Endothelial cell of umbilical vein (primary cell): ENCODE measurements at regions of chr1 and their contacts with region 1.

Region 1: DNA sequence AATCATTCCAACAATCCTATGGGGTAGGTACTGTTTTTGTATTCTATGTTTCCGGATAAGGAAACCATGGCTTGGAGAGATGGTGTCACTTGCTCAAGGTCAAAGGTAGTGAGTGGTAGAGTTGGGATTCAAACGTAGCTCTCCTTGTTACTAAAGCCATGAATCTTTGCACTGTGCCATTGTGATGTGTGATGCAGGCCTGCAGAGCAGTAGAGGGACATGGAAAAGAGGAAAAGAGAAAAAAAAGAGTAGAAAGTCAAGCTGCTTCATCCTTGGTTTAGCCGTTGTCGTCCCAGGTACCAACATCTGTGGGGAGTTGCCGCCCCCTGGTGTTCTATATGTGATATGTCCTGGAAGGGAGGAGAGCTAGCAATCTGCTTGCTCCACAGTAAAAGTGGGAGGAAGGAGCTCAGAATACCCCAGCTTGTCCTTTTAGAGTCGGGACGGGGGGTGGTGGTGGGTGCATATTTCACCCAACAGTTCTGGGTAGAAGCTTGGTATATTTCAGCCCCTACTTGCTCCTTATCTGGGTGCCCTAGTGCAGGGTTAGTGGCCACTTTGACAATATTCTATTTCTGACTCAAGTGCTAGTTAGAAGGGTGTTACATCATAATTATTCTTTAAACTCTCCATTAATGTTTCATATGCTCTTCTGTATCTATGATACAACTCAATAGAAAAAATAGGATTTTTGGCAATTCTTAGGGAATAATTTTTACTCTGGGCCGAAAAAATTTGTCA is 98.4 kb downstream of the EBNA1BP2 start:
- DNase-seq: peak; percentile 79
- H3K4me3 ChIP-seq: no peak overlapping the region
- H3K27ac ChIP-seq: no peak overlapping the region
- H3K4me1 ChIP-seq: no peaks in the 10 kb centered on the region
- H3K27me3 ChIP-seq: no peaks in the 10 kb centered on the region
- CTCF ChIP-seq: peak; percentile 75 to 83
- POLR2A ChIP-seq: no peak

Region 2: DNA sequence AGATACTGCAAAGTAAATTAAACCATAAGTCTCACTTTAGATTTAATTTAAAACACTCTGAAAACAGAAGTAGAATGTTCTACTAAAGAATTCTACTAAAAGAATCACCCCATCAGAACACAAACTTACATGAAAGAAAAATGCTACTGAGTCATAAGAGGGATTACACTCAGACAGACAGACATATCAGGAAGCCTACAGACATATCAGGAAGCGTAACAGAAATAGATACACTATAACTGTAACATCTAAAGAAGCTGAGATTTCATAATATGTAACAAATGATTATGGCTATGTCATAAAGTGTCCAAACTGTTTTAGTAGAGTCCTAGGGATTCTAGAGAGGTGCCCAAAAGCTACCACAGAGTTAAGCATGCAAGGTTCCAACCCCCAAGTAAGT is 762.5 kb before region 1 on chr1:
- CTCF ChIA-PET with region 1: no interaction called
- POLR2A ChIA-PET with region 1: no interaction called
- dilution Hi-C with region 1: no loop called
- intact Hi-C with region 1: no loop called
- DNase-seq: no peak
- H3K4me3 ChIP-seq: no peak overlapping the region
- H3K27ac ChIP-seq: no peak overlapping the region
- H3K4me1 ChIP-seq: no peaks in the 10 kb centered on the region
- H3K27me3 ChIP-seq: no peaks in the 10 kb centered on the region
- CTCF ChIP-seq: no peak
- POLR2A ChIP-seq: no peak

Region 3: DNA sequence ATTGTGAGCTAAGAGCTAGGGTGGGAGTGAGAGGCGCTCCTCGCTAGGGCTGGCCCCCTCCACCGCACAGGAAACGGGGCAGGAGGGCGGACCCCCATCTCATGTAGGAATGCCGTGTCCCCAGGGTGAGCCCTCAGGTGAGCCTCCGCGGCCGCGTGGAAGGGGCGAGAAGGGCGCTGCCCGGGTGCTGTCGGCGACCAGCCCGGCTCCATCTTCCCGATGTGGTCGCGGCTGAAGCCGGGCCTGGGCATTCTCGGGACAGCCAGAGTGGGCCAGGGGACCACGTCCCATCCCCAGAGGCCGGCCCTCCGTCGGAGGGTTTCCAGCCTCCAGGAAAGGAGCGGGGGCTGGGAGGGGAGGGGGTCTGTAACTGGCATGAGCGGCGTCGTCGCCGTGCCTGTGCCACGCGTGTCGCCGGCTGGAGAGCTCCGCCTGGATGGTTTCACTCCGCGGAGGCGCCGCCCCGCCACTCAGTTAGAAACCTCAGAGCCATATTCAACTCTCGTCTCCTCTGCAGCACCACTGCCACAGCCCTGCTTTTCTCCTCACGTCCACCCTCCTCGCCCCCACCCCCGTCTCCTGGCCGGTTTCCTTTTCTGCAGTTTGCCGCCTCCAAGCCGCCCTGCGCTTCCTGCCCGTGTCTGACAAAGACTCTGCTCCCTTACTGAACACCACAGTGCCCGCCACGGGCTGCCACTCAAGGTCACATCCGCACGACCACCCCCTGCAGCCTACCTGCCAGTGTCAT is 288.5 kb before region 1 on chr1 and contains the start of gene TMEM269:
- CTCF ChIA-PET with region 1: interaction called, 244 read pairs
- POLR2A ChIA-PET with region 1: no interaction called
- dilution Hi-C with region 1: no loop called
- intact Hi-C with region 1: no loop called
- DNase-seq: peak; percentile 38
- H3K4me3 ChIP-seq: peak within 1 kb of the TSS; percentile 14 to 37 (median 35)
- H3K27ac ChIP-seq: no peak within 1 kb of the TSS
- H3K4me1 ChIP-seq: peaks cover 8% of the 10 kb centered on the region
- H3K27me3 ChIP-seq: no peaks in the 10 kb centered on the region
- CTCF ChIP-seq: no peak
- POLR2A ChIP-seq: peak; percentile 21
- total RNA-seq, gene TMEM269: not detected in 2 replicates

Region 4: GRCh38 chr1:42846257-42847110 is 227.2 kb before region 1 on chr1 and contains the start of gene ZNF691:
- CTCF ChIA-PET with region 1: interaction called, 21 read pairs
- POLR2A ChIA-PET with region 1: no interaction called
- dilution Hi-C with region 1: no loop called
- intact Hi-C with region 1: no loop called
- DNase-seq: peak; percentile 99
- H3K4me3 ChIP-seq: peak within 1 kb of the TSS; percentile 61 to 84 (median 75)
- H3K27ac ChIP-seq: no peak within 1 kb of the TSS
- H3K4me1 ChIP-seq: peaks cover 12% of the 10 kb centered on the region
- H3K27me3 ChIP-seq: no peaks in the 10 kb centered on the region
- CTCF ChIP-seq: peak in 1 of 2 donors; percentile 44
- POLR2A ChIP-seq: peak; percentile 78
- total RNA-seq, gene ZNF691: 6.6 and 7.4 TPM in 2 replicates

Region 5: DNA sequence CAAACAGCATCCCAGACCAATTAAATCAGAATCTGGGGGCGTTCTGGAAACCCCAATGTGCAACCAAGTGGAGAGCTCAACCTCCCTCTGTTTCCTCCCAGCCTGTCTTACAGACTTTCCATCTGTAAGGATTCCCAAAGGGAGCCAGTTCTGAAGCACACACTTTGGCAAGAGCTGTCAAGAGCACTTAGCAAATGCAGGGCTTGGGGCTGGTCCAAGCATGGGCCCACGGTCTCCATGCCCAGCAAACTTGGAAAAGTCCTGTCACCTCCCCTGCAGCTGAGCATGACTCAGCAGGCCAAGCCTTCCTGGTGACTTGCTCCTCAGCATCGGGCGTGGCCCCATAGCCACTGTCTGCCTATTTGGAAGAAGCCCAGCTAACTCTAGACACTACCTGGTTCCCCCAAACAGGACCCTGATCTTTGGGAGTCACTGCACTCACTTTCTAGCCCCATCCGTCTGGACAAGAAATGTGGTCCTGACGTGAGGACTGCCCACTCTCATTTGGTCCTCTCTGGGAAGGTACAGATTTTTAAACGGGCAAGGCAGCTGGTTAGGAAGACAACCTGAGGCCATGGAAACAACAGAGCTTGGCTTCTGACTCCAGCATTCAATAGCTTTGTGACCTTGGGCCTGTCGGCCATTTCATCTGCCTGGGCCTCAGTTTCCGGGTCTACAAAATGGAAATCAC is 131.9 kb before region 1 on chr1:
- CTCF ChIA-PET with region 1: interaction called, 11 read pairs
- POLR2A ChIA-PET with region 1: no interaction called
- dilution Hi-C with region 1: no loop called
- intact Hi-C with region 1: no loop called
- DNase-seq: peak; percentile 79
- H3K4me3 ChIP-seq: no peak overlapping the region
- H3K27ac ChIP-seq: peak overlapping the region; percentile 98
- H3K4me1 ChIP-seq: peaks cover 47% of the 10 kb centered on the region
- H3K27me3 ChIP-seq: no peaks in the 10 kb centered on the region
- CTCF ChIP-seq: no peak
- POLR2A ChIP-seq: no peak

Region 6: DNA sequence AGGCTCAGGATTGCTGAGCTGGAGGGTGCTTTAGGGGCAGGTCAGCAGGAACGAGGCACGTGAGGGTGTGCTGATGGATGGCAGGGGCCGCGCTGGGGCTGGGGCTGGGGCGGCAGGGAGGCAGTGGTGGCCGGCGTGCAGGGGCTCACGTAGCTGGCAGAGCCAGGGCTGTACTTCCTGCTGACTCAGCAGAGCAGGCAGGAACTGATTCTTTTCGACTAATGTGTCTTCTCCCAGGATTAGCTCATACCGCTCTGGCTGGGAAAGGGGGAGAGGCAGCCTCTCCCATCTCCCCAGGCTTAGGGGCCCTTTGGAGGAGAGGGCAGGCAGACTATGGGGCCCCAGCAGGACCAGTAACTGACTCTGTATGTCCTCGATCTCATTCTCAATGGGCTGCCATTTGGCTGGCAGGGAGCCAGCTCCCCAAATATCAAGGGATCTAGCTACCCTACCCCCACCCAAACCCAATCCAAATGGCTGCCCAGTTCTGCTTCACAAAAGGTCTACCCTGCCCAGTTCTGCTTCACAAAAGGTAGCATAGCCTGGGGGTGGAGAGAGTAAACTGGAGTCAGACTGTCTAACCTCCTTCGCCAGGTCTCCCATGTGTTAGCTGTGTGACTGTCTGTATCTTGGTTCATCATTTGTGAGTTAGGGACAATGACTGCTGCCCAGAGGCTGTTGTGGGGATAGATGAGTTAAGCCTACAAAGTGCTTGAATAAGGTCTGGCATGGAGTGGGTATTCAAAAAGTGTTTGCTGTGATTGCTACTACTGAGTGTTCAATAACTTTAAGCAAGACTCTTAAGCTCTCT is 14.9 kb before region 1 on chr1:
- CTCF ChIA-PET with region 1: interaction called, 21 read pairs
- POLR2A ChIA-PET with region 1: no interaction called
- dilution Hi-C with region 1: no loop called
- intact Hi-C with region 1: no loop called
- DNase-seq: peak; percentile 7
- H3K4me3 ChIP-seq: no peak overlapping the region
- H3K27ac ChIP-seq: no peak overlapping the region
- H3K4me1 ChIP-seq: no peaks in the 10 kb centered on the region
- H3K27me3 ChIP-seq: peaks cover 0 to 17% of the 10 kb centered on the region in 2 experiments
- CTCF ChIP-seq: no peak
- POLR2A ChIP-seq: no peak

Region 7: GRCh38 chr1:43414634-43415223 is 341.1 kb after region 1 on chr1:
- CTCF ChIA-PET with region 1: interaction called, 15 read pairs
- POLR2A ChIA-PET with region 1: no interaction called
- dilution Hi-C with region 1: no loop called
- intact Hi-C with region 1: loop called (anchors 1 kb)
- DNase-seq: peak; percentile 81
- H3K4me3 ChIP-seq: no peak overlapping the region
- H3K27ac ChIP-seq: no peak overlapping the region
- H3K4me1 ChIP-seq: peaks cover 7% of the 10 kb centered on the region
- H3K27me3 ChIP-seq: no peaks in the 10 kb centered on the region
- CTCF ChIP-seq: peak; percentile 68 to 79
- POLR2A ChIP-seq: no peak